ENCODE measurements at regions of chr3 and their contacts with region 1.

Region 1: DNA sequence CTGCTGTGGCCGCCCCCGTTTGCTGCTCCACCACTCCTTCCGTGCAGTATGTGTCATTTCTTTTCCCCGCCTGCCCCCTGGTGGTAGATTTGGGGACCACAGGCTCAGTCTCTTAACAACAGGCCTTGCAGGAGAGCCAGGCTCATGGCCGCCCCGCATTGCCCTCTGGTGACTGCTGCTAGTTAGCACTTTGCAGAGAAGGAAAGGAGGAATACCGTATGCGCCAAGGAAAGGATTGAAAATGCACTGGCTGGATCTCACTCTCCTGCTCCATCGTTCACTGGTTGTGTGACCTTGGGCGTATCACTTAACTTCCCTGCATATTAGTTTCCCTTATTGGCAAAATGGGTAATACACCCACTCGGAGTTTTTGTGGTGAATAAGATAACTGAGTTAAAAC is 39.3 kb upstream of the PXYLP1 start:
- DNase-seq: peak; percentile 79 to 94 (median 86)
- ATAC-seq: peak; percentile 100
- H3K4me3 ChIP-seq: no peak overlapping the region
- H3K27ac ChIP-seq: no peak overlapping the region
- H3K4me1 ChIP-seq: no peaks in the 10 kb centered on the region
- H3K27me3 ChIP-seq: peaks cover 17 to 32% of the 10 kb centered on the region in 2 experiments; a peak in 4 of 5 replicates
- CTCF ChIP-seq: peak; percentile 99 to 100 (median 99)
- EP300 ChIP-seq: no peak
- POLR2A ChIP-seq: no peak
- RAD21 ChIP-seq: peak; percentile 97 to 99

Region 2: GRCh38 chr3:139574026-139574947 is 1618.1 kb before region 1 on chr3:
- CTCF ChIA-PET with region 1: no interaction called
- POLR2A ChIA-PET with region 1: no interaction called
- in situ Hi-C with region 1: no loop called
- intact Hi-C with region 1: no loop called
- DNase-seq: no peak
- ATAC-seq: no peak
- H3K4me3 ChIP-seq: no peak overlapping the region
- H3K27ac ChIP-seq: no peak overlapping the region
- H3K4me1 ChIP-seq: no peaks in the 10 kb centered on the region
- H3K27me3 ChIP-seq: no peaks in the 10 kb centered on the region
- CTCF ChIP-seq: peak in 2 of 3 experiments; percentile 3 to 16; a peak in 1 of 6 replicates
- EP300 ChIP-seq: no peak
- POLR2A ChIP-seq: no peak
- RAD21 ChIP-seq: no peak

Region 3: DNA sequence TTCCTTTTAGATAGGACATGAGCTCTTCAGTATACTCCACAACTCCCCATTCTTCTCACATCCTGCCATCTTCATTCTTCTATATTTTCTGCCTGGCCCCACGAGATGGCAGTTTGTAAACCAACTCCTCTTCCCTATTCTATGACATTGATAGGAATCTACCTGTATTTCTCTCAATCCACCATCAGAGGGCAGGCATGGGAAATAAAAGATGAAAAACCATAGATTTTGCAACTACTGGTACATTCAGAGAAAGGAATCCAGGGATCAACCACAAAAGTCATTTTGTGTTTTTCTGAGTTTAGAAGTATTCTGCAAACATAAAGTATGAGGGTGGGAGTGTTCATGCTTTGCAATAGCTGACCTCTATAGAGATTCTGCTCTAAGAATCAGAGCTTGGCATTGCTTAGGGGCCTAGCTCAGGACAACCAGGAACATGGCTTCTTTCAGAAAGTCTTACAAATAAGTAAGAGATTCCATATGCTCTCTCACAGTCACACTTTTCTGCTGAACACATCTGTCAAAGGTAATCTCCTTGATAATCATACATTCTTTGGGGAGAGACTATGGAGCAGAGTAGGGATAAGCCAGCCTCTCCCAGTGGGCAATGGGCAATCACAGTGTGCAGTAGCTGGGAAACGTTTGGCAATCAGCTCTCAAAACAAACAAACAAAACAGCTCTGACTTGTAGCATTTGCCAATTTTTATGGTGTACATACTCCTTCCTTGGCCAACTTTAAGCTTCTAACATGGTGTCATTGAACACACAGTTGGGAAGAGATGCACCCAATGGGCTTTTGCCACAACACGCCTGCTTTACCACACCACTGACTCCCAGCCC is 293.8 kb before region 1 on chr3:
- CTCF ChIA-PET with region 1: interaction called, 19 read pairs
- POLR2A ChIA-PET with region 1: no interaction called
- in situ Hi-C with region 1: no loop called
- intact Hi-C with region 1: no loop called
- DNase-seq: peak; percentile 23 to 48 (median 38)
- ATAC-seq: peak; percentile 72
- H3K4me3 ChIP-seq: no peak overlapping the region
- H3K27ac ChIP-seq: no peak overlapping the region
- H3K4me1 ChIP-seq: no peaks in the 10 kb centered on the region
- H3K27me3 ChIP-seq: no peaks in the 10 kb centered on the region; a peak in 1 of 5 replicates
- CTCF ChIP-seq: peak; percentile 44 to 75 (median 70); a peak in 5 of 6 replicates
- EP300 ChIP-seq: no peak
- POLR2A ChIP-seq: no peak
- RAD21 ChIP-seq: peak; percentile 63 to 65

Region 4: DNA sequence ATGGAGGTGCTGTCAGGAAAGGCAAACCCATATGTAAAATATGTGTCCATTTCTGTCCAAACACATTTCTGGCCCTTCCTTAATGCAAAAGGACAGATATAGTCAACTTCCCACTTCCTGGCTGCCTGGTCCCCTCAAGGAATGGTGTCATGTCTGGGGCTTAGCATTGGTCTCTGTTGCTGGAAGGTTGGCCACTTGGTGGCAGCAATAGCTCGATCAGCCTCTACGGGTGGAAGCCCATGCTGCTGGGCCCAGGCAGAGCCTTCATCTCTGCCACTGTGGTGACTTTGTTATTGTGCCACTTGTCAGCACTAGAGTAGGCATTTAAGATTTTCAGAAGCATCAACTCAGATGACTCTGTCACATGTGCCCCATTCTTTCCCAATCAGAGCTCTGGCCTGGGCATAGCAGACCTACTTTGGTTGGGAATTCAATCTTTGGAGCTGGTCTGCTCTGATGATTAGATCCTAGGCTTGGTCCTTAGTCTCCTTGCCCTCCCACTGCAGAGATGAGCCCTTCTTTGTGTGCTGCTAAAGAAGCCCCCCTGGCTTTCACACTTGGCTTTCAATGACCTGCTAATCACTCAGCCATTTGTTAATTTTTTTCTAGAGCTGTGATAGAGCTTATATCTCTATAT is 192.2 kb before region 1 on chr3:
- CTCF ChIA-PET with region 1: interaction called, 21 read pairs
- POLR2A ChIA-PET with region 1: interaction called, 5 read pairs
- in situ Hi-C with region 1: loop called (anchors 25 kb)
- intact Hi-C with region 1: loop called (anchors 1 kb)
- DNase-seq: peak; percentile 20 to 65 (median 33)
- ATAC-seq: peak; percentile 99
- H3K4me3 ChIP-seq: no peak overlapping the region
- H3K27ac ChIP-seq: no peak overlapping the region
- H3K4me1 ChIP-seq: no peaks in the 10 kb centered on the region
- H3K27me3 ChIP-seq: peaks cover 0 to 6% of the 10 kb centered on the region in 2 experiments; a peak in 1 of 5 replicates
- CTCF ChIP-seq: peak; percentile 76 to 84 (median 79)
- EP300 ChIP-seq: no peak
- POLR2A ChIP-seq: no peak
- RAD21 ChIP-seq: peak; percentile 76 to 77

Region 5: DNA sequence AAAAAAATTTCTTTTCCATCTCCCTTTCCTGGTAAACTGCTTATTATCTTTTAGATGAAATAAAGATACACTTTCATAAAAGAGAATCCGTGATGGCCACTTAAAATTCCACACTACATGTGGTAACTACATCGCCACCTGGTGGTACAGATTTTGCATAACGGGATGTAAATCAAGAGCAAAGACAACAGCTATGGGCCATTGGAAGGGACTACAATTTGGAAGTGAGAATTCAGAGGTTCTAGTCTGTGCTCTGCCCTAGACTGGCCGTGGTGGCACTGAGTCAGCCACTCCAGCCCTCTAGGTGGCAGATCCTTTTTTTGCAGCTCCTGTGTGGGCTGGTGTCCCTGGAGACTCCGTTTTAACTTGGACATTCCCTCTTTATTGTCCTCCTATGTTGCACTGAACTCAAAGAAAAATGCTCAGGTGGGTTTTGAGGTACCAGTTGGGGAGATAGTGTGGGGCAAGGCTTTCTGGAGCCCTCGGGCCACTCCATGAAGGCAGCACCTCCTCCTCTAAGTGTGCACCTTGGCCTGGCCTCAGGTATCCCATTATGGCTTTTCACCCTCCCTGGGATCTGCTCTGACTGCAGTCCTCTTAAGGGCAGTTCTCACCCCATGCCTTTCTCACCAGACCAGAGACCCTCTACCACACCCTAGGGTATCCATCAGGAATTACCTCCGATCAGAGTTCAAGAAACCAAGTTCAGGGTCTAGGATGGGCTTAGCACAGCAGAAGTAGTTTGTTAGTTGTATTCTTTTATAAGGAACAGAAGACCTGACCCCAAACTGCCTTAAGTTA is 86.3 kb before region 1 on chr3:
- CTCF ChIA-PET with region 1: no interaction called
- POLR2A ChIA-PET with region 1: no interaction called
- in situ Hi-C with region 1: loop called (anchors 5 kb)
- intact Hi-C with region 1: no loop called
- DNase-seq: peak; percentile 54 to 77 (median 58)
- ATAC-seq: peak; percentile 83
- H3K4me3 ChIP-seq: no peak overlapping the region
- H3K27ac ChIP-seq: no peak overlapping the region
- H3K4me1 ChIP-seq: no peaks in the 10 kb centered on the region
- H3K27me3 ChIP-seq: peaks cover 9 to 42% of the 10 kb centered on the region in 2 experiments; a peak in 4 of 5 replicates
- CTCF ChIP-seq: peak; percentile 75 to 82 (median 75)
- EP300 ChIP-seq: no peak
- POLR2A ChIP-seq: no peak
- RAD21 ChIP-seq: peak; percentile 68 to 83

Region 6: DNA sequence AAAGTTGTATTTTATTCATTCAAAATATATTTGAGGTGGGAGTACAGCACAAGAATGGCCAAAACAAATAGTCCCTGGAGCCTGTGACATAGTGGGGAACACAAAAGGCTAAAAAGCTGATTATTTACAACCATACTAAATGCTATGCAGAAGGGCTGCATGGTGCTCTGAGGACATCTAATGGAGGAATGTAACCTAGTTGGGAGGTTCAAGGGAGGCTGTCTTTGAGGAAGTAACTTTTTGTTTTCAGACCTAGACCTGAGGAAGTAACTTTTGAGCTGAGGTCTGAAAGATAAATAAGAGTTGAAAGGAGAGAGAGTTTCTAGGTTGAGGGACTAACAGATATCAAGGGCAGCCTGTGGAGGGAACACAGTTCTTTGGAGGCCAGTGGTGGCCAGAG is 259.7 kb after region 1 on chr3:
- CTCF ChIA-PET with region 1: no interaction called
- POLR2A ChIA-PET with region 1: no interaction called
- in situ Hi-C with region 1: no loop called
- intact Hi-C with region 1: loop called (anchors 1 kb)
- DNase-seq: peak; percentile 26 to 83 (median 48)
- ATAC-seq: peak; percentile 89
- H3K4me3 ChIP-seq: no peak overlapping the region
- H3K27ac ChIP-seq: peak overlapping the region; percentile 66
- H3K4me1 ChIP-seq: peaks cover 22 to 47% of the 10 kb centered on the region in 2 experiments
- H3K27me3 ChIP-seq: no peaks in the 10 kb centered on the region
- CTCF ChIP-seq: peak; percentile 76 to 97 (median 87)
- EP300 ChIP-seq: no peak
- POLR2A ChIP-seq: no peak
- RAD21 ChIP-seq: peak; percentile 99

Measured in K562 (cell line).